ENCODE measurements at regions of chr6 and their contacts with region 1.

Region 1: GRCh38 chr6:107847844-107848802 is 24.0 kb upstream of the SCML4 start:
- DNase-seq: peak; percentile 85
- ATAC-seq: peak; percentile 94
- H3K4me3 Mint-ChIP-seq: peak overlapping the region; percentile 71
- H3K27ac Mint-ChIP-seq: peak overlapping the region; percentile 65
- H3K4me1 Mint-ChIP-seq: peaks cover 29% of the 10 kb centered on the region
- H3K27me3 Mint-ChIP-seq: no peaks in the 10 kb centered on the region

Region 2: DNA sequence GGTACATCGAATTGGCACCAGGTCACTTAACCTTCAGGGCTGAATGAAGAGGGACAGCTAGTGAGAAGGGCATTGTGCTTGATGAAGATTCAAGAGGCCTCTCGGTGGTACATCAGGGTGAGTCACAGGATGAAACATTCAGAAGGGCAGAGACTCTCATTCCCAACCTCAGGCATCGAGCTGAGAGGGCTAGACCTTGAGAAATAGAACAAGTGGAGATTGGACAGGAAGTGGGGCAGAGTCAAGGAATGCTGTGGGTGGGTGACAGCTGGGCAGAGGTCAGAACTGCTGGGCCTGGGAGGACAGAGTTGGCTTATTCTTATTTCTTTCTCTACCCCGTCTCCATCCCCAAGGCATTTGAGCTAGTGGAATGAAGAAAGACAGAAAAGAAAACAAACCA is 150.0 kb before region 1 on chr6:
- CTCF ChIA-PET with region 1: interaction called, 26 read pairs
- POLR2A ChIA-PET with region 1: no interaction called
- DNase-seq: no peak
- ATAC-seq: no peak
- H3K4me3 Mint-ChIP-seq: no peak overlapping the region
- H3K27ac Mint-ChIP-seq: no peak overlapping the region
- H3K4me1 Mint-ChIP-seq: peaks cover 8% of the 10 kb centered on the region
- H3K27me3 Mint-ChIP-seq: peaks cover 3% of the 10 kb centered on the region

Region 3: DNA sequence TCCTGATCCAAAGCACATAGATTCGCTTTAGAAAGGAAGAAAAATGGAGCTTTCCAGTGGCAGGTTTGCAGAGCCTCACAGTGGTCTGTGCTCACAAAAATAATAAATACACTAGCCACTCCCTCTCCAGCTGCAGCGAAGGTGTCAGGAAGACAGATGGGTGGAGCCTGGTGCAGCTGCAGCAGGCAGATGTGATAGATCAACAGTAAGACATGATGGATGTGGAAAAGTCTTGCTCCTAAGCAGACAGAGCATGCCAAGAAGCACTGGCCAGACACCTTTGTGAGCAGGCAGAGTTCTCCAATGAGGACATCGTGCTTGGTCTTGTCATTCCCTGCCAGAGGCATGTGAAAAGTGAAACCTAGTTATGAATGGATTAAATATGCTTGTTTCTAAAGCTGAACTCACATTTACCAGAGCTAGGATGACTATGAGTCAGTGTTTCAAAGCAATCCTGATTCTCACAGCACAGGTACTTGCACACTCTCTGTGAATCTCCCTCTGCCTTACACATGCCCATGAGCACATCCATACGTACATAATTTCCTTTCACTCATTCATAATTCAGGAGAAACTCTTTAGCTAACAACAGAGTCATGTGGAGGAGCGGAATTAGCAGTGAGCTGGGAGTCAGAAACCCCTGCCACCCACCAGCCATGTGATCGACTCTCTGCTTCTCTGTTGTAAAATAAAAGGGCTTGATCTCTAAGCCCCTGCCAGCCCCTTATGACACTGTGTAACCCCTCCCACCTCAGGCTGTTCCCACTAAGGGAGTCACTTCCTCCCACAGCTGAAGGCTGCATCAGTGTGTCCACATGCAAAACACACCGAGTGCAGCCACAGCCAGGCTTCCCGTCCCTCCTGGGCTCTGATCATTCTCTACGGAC is 135.2 kb before region 1 on chr6:
- CTCF ChIA-PET with region 1: interaction called, 15 read pairs
- POLR2A ChIA-PET with region 1: interaction called, 3 read pairs
- DNase-seq: peak; percentile 59
- ATAC-seq: peak; percentile 37
- H3K4me3 Mint-ChIP-seq: peak overlapping the region; percentile 49
- H3K27ac Mint-ChIP-seq: peak overlapping the region; percentile 84
- H3K4me1 Mint-ChIP-seq: peaks cover 65% of the 10 kb centered on the region
- H3K27me3 Mint-ChIP-seq: no peaks in the 10 kb centered on the region

Region 4: DNA sequence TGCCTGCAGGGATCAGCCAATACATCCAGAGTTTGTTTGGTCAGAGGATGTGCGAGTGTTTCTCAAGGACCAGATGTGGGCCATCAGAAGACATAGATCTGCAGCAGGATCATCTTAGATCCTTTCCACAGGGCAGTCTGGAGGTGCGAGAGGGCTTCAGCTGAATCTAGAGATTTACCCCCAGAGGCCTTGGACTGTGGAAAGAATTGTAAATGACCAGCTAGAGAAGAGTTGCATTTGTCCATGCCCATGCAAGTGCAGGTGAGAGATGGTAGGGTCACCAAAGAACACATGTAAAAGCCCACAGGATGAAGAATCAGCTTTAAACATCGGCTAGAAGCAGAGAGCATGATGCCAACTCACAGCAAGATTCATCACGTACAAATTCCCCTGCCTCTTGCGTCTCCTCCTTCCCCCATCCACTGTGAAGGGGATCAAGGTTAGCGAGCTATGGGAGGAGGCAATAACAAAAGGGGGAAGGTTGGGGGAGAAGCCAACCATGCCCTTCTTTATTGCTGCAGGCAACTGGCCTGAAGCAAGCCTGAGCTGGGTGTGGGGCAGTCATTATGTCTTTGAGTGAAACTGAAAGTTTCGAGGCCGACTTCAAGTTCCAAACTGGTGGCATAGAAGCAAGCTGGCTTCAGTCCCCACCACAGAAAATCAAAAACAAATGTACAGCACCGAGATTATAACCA is 107.5 kb before region 1 on chr6:
- CTCF ChIA-PET with region 1: interaction called, 73 read pairs
- POLR2A ChIA-PET with region 1: interaction called, 8 read pairs
- DNase-seq: peak; percentile 65
- ATAC-seq: peak; percentile 62
- H3K4me3 Mint-ChIP-seq: peak overlapping the region; percentile 61
- H3K27ac Mint-ChIP-seq: peak overlapping the region; percentile 87
- H3K4me1 Mint-ChIP-seq: peaks cover 62% of the 10 kb centered on the region
- H3K27me3 Mint-ChIP-seq: no peaks in the 10 kb centered on the region

Region 5: DNA sequence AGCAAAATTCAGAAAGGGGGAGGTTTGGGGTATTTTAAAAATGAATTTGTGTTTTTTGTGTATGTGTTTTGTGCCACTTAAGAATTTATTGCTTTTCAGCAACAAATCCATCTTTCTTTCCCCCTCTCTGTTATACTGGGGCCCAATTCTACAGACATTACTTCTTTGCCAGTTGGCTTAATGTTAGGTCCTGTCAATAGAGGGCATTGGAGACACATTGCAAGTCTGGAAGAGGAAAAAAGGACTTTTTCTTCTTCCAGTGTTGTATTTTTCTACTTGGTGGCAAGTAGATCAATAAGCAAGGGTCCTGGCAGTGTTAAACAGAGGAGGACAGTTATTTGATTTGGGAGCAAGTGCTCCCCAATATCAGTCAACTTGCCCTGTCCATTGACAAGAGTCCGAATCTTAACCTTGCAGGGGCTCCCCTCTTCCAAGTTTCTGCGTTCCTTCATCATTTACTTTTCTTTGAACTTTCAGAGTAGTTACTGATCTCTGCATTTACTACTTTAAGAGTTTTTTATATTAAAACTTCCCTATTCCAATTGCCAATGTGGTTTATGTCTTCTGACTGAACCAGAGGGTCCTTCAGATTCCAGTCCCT is 47.5 kb before region 1 on chr6:
- CTCF ChIA-PET with region 1: interaction called, 14 read pairs
- POLR2A ChIA-PET with region 1: no interaction called
- DNase-seq: peak; percentile 20
- ATAC-seq: no peak
- H3K4me3 Mint-ChIP-seq: no peak overlapping the region
- H3K27ac Mint-ChIP-seq: peak overlapping the region; percentile 9
- H3K4me1 Mint-ChIP-seq: peaks cover 30% of the 10 kb centered on the region
- H3K27me3 Mint-ChIP-seq: no peaks in the 10 kb centered on the region

Region 6: DNA sequence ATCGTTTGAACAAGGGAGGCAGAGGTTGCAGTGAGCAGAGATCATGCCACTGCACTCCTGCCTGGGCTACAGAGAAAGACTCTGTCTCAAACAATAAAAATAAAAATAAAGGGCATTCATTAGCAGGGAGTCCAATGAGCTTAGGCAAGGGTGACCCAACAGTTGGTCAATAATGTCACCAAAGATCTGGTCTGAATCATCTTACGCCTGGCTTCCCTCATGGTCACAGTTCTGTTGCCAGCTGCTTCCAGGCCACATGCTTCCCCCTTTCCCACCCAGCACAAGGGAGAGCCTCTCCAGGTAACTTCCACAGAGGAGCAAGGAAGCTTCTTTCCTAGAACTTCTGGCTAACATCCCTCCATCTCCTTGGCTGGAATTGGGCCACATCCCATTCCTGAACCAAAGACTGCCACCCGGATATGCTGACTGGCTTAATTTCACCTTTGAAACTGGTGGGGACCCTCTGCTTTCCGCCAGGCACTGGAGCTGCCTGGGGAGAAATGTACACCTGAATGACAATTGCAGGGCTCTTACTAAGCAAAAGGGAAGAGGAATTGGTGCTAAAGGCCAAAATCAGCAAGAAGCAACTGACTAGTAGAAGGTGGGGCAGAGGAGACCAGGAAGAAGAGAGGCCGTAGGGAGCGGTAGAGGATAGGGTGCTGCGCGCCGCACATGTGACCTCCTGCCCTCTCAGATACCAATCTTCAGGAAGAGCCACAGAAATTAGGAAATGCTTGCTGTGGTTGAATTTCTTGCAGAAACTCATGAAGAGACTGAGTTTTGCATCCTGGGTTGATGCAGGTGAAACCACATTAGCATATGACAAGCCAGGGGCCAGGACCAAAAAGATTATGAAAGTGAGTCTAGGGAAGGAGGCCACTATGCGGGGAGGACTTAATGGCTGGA is 15.7 kb before region 1 on chr6:
- CTCF ChIA-PET with region 1: interaction called, 58 read pairs
- POLR2A ChIA-PET with region 1: interaction called, 5 read pairs
- DNase-seq: no peak
- ATAC-seq: peak; percentile 21
- H3K4me3 Mint-ChIP-seq: no peak overlapping the region
- H3K27ac Mint-ChIP-seq: no peak overlapping the region
- H3K4me1 Mint-ChIP-seq: peaks cover 23% of the 10 kb centered on the region
- H3K27me3 Mint-ChIP-seq: no peaks in the 10 kb centered on the region

Region 7: DNA sequence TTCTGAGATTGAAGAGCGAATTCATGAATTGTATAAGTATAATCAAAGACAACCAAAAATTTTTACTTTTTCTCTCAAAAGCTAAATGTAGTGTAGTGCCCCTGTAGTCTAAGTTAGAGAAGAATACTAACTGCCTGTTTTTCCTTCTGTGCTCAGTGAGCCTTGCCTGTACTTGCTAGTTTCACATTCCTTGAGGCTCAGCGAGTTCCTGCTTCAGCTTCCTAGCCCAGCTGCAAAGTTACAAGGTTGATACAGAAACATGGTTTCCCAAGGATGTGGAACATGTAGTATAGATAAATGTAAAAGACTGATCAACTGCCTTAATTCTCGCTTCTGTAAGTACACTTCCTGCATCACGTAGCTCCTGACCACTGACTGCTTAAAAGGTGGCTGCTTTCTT is 142.9 kb after region 1 on chr6:
- CTCF ChIA-PET with region 1: no interaction called
- POLR2A ChIA-PET with region 1: no interaction called
- DNase-seq: no peak
- ATAC-seq: no peak
- H3K4me3 Mint-ChIP-seq: no peak overlapping the region
- H3K27ac Mint-ChIP-seq: peak overlapping the region; percentile 79
- H3K4me1 Mint-ChIP-seq: peaks cover 9% of the 10 kb centered on the region
- H3K27me3 Mint-ChIP-seq: no peaks in the 10 kb centered on the region

Region 8: DNA sequence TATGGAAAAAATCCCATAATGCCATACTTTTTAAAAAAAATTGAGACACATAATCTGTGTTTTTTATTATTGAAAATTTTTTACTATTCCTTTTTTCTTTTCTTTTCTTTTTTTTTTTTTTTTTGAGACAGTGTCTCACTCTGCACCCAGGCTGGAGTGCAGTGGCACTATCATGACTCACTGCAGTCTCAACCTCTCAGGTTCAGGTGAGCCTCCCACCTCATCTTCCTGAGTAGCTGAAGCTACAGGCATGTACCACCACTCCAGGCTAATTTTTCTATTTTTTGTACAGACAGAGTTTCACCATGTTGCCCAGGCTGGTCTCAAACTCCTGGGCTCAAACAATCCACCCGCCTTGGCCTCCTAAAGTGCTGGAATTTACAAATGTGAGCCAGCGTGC is 547.2 kb after region 1 on chr6:
- CTCF ChIA-PET with region 1: no interaction called
- POLR2A ChIA-PET with region 1: no interaction called
- DNase-seq: no peak
- ATAC-seq: no peak
- H3K4me3 Mint-ChIP-seq: no peak overlapping the region
- H3K27ac Mint-ChIP-seq: no peak overlapping the region
- H3K4me1 Mint-ChIP-seq: no peaks in the 10 kb centered on the region
- H3K27me3 Mint-ChIP-seq: peaks cover 3% of the 10 kb centered on the region

Measured in activated CD8-positive, alpha-beta T cell treated with anti-CD3 and anti-CD28 coated beads, Interleukin-2, amount 10 ng/mL, durations not matched to agents 7 days and 5 days (primary cell).